HCT116 (cell line): ENCODE measurements at regions of chr1 and their contacts with region 1.

Region 1: GRCh38 chr1:37486680-37487618 is 12.6 kb downstream of the ZC3H12A start:
- DNase-seq: peak; percentile 31
- ATAC-seq: peak; percentile 89
- H3K4me3 ChIP-seq: no peak overlapping the region
- H3K27ac ChIP-seq: no peak overlapping the region
- H3K4me1 ChIP-seq: peaks cover 0 to 5% of the 10 kb centered on the region in 2 experiments; a peak in 2 of 4 replicates
- H3K27me3 ChIP-seq: no peaks in the 10 kb centered on the region
- CTCF ChIP-seq: peak; percentile 92 to 99 (median 98)
- POLR2A ChIP-seq: no peak
- RAD21 ChIP-seq: peak; percentile 95

Region 2: GRCh38 chr1:37449936-37450335 is 37.0 kb before region 1 on chr1:
- CTCF ChIA-PET with region 1: interaction called, 62 read pairs
- POLR2A ChIA-PET with region 1: no interaction called
- RAD21 ChIA-PET with region 1: interaction called, 5 to 7 read pairs
- intact Hi-C with region 1: loop called (anchors 1 kb)
- DNase-seq: no peak
- ATAC-seq: no peak
- H3K4me3 ChIP-seq: no peak overlapping the region
- H3K27ac ChIP-seq: no peak overlapping the region
- H3K4me1 ChIP-seq: peaks cover 5 to 27% of the 10 kb centered on the region in 2 experiments; a peak in 3 of 4 replicates
- H3K27me3 ChIP-seq: no peaks in the 10 kb centered on the region
- CTCF ChIP-seq: no peak
- POLR2A ChIP-seq: no peak
- RAD21 ChIP-seq: no peak

Region 3: DNA sequence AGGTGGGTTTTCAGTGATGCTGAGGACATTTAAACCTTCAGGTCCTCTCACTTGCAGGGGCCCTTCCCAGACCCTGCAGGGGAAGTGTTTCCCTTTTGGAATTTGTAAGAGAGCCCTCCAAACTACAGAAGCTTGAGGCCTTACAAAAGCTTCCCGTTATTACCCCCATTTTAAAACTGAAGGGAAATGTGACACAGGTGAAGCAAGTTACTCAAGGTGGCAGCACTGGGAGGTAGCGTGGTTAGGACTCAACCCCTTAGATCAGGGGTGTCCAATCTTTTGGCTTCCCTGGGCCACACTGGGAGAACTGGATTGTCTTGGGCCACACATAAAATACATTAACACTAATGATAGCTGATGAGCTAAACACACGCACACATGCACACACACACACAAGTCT is 28.4 kb before region 1 on chr1:
- CTCF ChIA-PET with region 1: interaction called, 62 read pairs
- POLR2A ChIA-PET with region 1: no interaction called
- RAD21 ChIA-PET with region 1: interaction called, 7 to 8 read pairs
- intact Hi-C with region 1: loop called (anchors 1 kb)
- DNase-seq: no peak
- ATAC-seq: peak; percentile 48
- H3K4me3 ChIP-seq: no peak overlapping the region
- H3K27ac ChIP-seq: no peak overlapping the region
- H3K4me1 ChIP-seq: peaks cover 3 to 17% of the 10 kb centered on the region in 2 experiments; a peak in 3 of 4 replicates
- H3K27me3 ChIP-seq: no peaks in the 10 kb centered on the region
- CTCF ChIP-seq: peak in 2 of 3 experiments; percentile 39 to 60; a peak in 3 of 6 replicates
- POLR2A ChIP-seq: no peak
- RAD21 ChIP-seq: peak; percentile 64

Region 4: GRCh38 chr1:37474046-37474759 is 12.7 kb before region 1 on chr1 and contains the start of gene ZC3H12A:
- CTCF ChIA-PET with region 1: interaction called, 59 read pairs
- POLR2A ChIA-PET with region 1: interaction called, 34 read pairs
- RAD21 ChIA-PET with region 1: interaction called in 1 of 2 experiments, 4 read pairs
- intact Hi-C with region 1: no loop called
- DNase-seq: peak; percentile 75
- ATAC-seq: peak; percentile 69
- H3K4me3 ChIP-seq: peak within 1 kb of the TSS; percentile 80
- H3K27ac ChIP-seq: peak within 1 kb of the TSS; percentile 91
- H3K4me1 ChIP-seq: peaks cover 70 to 80% of the 10 kb centered on the region in 2 experiments
- H3K27me3 ChIP-seq: 0 out of 2 replicates have a peak, but pooled peaks cover 3% of the 10 kb centered on the region
- CTCF ChIP-seq: no peak
- POLR2A ChIP-seq: peak; percentile 64
- RAD21 ChIP-seq: no peak
- total RNA-seq, gene ZC3H12A: 10.6 TPM

Region 5: GRCh38 chr1:37498872-37499617 is 12.1 kb after region 1 on chr1:
- CTCF ChIA-PET with region 1: interaction called, 12 read pairs
- POLR2A ChIA-PET with region 1: interaction called, 4 read pairs
- RAD21 ChIA-PET with region 1: no interaction called
- intact Hi-C with region 1: no loop called
- DNase-seq: no peak
- ATAC-seq: no peak
- H3K4me3 ChIP-seq: no peak overlapping the region
- H3K27ac ChIP-seq: no peak overlapping the region
- H3K4me1 ChIP-seq: peaks cover 0 to 9% of the 10 kb centered on the region in 2 experiments; a peak in 1 of 4 replicates
- H3K27me3 ChIP-seq: no peaks in the 10 kb centered on the region
- CTCF ChIP-seq: no peak
- POLR2A ChIP-seq: no peak
- RAD21 ChIP-seq: no peak

Region 6: GRCh38 chr1:37514350-37515184 is 27.6 kb after region 1 on chr1 and contains the start of gene MEAF6:
- CTCF ChIA-PET with region 1: interaction called, 10 read pairs
- POLR2A ChIA-PET with region 1: no interaction called
- RAD21 ChIA-PET with region 1: no interaction called
- intact Hi-C with region 1: no loop called
- DNase-seq: peak; percentile 36
- ATAC-seq: peak; percentile 96
- H3K4me3 ChIP-seq: peak within 1 kb of the TSS; percentile 72 to 82
- H3K27ac ChIP-seq: peak within 1 kb of the TSS; percentile 71
- H3K4me1 ChIP-seq: peaks cover 10 to 19% of the 10 kb centered on the region in 2 experiments; a peak in 3 of 4 replicates
- H3K27me3 ChIP-seq: no peaks in the 10 kb centered on the region
- CTCF ChIP-seq: peak in 2 of 3 experiments; percentile 42 to 61; a peak in 3 of 6 replicates
- POLR2A ChIP-seq: peak; percentile 83
- RAD21 ChIP-seq: 0 out of 2 replicates have a peak, but pooled peaks have one; percentile 8
- total RNA-seq, gene MEAF6: 50.3 TPM